ENCODE measurements at regions of chr5 and their contacts with region 1.

Region 1: DNA sequence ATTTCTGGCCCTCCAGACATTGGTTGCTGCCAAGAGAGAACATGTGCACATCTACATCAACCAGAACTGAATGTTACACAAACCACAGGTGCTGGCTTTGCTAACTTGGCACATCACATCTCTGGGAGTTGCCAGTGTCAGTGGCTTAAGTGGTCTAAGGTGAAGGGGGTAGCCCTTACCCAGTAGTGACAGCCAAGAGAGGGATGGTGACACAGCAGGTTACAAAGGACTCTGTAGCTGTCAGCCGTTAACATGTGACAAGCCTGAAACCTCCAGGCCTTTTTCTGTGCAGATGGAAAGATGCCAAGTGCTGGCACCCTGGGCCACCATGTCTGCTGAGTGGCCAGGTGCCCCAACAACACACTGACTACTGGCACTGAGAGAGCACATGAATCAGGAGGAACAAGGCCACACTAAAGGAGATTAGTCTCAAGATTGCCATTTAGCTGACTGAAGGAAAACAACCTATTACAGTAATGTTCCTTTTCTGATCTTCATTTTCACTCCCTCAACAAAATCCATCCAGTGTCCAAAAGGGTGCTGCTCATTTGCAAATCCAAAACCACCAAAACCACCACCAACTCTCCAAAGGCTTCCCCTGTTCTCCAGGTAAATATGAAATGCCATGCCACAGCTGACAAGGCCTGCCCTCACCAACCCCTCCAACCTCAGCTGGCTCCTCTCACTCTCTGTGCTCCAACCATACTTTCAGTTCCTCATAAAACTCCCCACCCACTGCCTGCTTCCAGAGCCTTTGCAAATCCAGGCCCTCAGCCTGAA is 20.2 kb downstream of the SIL1 start:
- DNase-seq: peak; percentile 76

Region 2: GRCh38 chr5:139137702-139138101 is 40.3 kb before region 1 on chr5:
- intact Hi-C with region 1: loop called (anchors 5 kb)
- DNase-seq: no peak

Region 3: GRCh38 chr5:139215107-139215975 is 37.3 kb after region 1 on chr5:
- intact Hi-C with region 1: no loop called
- DNase-seq: no peak

Measured in cardiac septum (tissue), 1 donor.